Adrenal gland (tissue), 19 donors: ENCODE measurements at regions of chr17 and their contacts with region 1.

Region 1: GRCh38 chr17:6666077-6666521 is 14.5 kb downstream of the C17orf100 start:
- DNase-seq: peak; percentile 72 to 89 (median 81)
- H3K4me3 ChIP-seq: no peak overlapping the region
- H3K27ac ChIP-seq: no peak overlapping the region
- H3K4me1 ChIP-seq: no peaks in the 10 kb centered on the region
- H3K27me3 ChIP-seq: no peaks in the 10 kb centered on the region
- CTCF ChIP-seq: peak; percentile 78 to 93 (median 89)
- POLR2A ChIP-seq: no peak

Region 2: DNA sequence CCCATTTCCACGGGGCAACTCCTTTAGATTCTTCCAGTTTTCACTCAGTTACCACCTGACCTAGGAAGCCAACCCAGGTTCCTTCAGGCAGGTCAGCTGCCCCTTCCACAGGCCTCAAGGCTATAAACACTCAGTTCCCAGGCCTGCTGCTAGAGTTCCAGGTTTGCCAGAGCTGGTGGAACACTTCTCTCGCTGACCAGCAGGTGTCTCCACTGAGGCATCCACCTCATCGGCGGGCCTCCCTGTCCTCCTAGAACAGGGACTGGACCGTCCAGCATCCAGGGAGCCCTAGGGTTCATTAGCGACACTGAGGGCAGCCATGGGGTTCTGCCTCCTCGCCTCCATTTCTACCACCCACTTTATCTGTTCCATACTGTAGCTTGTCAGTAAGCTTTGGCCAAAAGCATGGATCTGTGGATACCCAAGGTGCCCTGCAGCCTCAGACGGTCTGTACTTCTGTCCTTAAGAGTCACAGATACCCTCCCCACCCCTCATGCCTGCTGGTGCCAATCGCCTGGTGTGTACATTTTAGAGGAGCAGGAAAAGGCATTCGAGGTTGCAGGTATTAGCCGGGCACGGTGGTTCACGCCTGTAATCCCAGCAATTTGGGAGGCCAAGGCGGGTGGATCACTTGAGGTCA is 192.9 kb before region 1 on chr17:
- intact Hi-C with region 1: no loop called
- DNase-seq: peak; percentile 85 to 95 (median 90)
- H3K4me3 ChIP-seq: no peak overlapping the region
- H3K27ac ChIP-seq: no peak overlapping the region
- H3K4me1 ChIP-seq: peaks cover 0 to 23% of the 10 kb centered on the region in 2 donors
- H3K27me3 ChIP-seq: no peaks in the 10 kb centered on the region
- CTCF ChIP-seq: peak; percentile 91 to 98 (median 95)
- POLR2A ChIP-seq: peak in 1 of 2 donors; percentile 26

Region 3: GRCh38 chr17:6548578-6549330 is 117.3 kb before region 1 on chr17:
- intact Hi-C with region 1: no loop called
- DNase-seq: no peak
- H3K4me3 ChIP-seq: no peak overlapping the region
- H3K27ac ChIP-seq: peak overlapping the region in 1 of 5 donors; percentile 14
- H3K4me1 ChIP-seq: no peaks in the 10 kb centered on the region
- H3K27me3 ChIP-seq: no peaks in the 10 kb centered on the region
- CTCF ChIP-seq: no peak
- POLR2A ChIP-seq: no peak

Region 4: GRCh38 chr17:6775871-6776405 is 109.8 kb after region 1 on chr17 and contains the start of gene FBXO39:
- intact Hi-C with region 1: loop called in 1 of 2 experiments (anchors 10 kb)
- DNase-seq: no peak
- H3K4me3 ChIP-seq: no peak within 1 kb of the TSS
- H3K27ac ChIP-seq: no peak within 1 kb of the TSS
- H3K4me1 ChIP-seq: no peaks in the 10 kb centered on the region
- H3K27me3 ChIP-seq: no peaks in the 10 kb centered on the region
- CTCF ChIP-seq: no peak
- POLR2A ChIP-seq: no peak
- total RNA-seq, gene FBXO39: 0.14 to 0.35 (median 0.19) TPM in 3 of 9 donors, not detected in the others

Region 5: GRCh38 chr17:6843241-6843880 is 177.3 kb after region 1 on chr17:
- intact Hi-C with region 1: loop called (anchors 5 to 10 kb)
- DNase-seq: no peak
- H3K4me3 ChIP-seq: no peak overlapping the region
- H3K27ac ChIP-seq: no peak overlapping the region
- H3K4me1 ChIP-seq: peaks cover 0 to 5% of the 10 kb centered on the region in 2 donors
- H3K27me3 ChIP-seq: peaks cover 14% of the 10 kb centered on the region
- CTCF ChIP-seq: peak; percentile 33 to 62 (median 58)
- POLR2A ChIP-seq: no peak

Region 6: DNA sequence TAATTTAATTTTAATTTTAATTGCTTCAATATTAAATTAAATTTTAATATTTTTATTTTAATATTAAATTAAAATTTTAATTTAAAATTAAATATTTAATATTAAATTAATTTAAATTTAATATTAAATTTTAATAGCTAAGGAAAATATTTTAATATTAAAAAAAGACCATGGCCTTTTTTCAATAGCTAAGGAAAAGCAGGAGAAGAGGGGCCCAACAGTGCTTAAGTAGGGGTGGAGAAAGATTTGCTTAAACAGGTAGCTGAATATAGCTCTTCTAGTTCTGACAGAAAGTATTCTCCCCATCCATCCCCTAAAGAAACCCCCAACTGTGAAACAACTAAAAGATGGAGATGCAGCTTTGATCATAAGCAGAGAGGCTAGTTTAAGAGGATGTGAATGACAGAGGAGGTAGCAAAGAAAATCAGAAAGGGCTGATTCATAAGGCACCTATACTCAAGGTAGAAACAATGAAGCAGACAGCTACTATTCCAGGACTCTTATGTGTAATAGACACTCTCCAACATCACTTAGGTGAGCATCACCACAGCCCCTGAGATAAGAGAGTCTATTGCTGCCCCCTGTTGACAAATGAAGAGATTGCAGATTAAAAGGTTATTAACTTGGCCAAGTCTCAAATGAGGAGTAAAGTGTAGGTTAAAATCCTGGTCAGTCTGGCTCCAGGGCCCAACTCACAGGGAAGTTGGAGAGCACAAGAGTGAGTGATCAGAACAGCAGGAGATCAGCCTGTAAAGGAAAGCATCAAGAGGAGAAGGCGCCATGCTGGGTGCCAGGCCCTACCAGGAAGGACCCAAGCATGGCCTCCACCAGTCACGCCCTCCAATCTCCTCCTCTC is 338.5 kb after region 1 on chr17:
- intact Hi-C with region 1: loop called (anchors 10 kb)
- DNase-seq: peak in 3 of 7 donors; percentile 29 to 38 (median 35)
- H3K4me3 ChIP-seq: no peak overlapping the region
- H3K27ac ChIP-seq: no peak overlapping the region
- H3K4me1 ChIP-seq: no peaks in the 10 kb centered on the region
- H3K27me3 ChIP-seq: no peaks in the 10 kb centered on the region
- CTCF ChIP-seq: peak; percentile 46 to 81 (median 74)
- POLR2A ChIP-seq: no peak